ENCODE measurements at regions of chr7 and their contacts with region 1.

Region 1: GRCh38 chr7:37342688-37343471 is 105.8 kb downstream of the ELMO1 start:
- DNase-seq: peak; percentile 52 to 91 (median 70)
- ATAC-seq: peak; percentile 88
- H3K4me3 ChIP-seq: peak overlapping the region; percentile 62
- H3K4me3 Mint-ChIP-seq: peak overlapping the region; percentile 90
- H3K27ac ChIP-seq: peak overlapping the region; percentile 67 to 82
- H3K27ac Mint-ChIP-seq: peak overlapping the region; percentile 95
- H3K4me1 ChIP-seq: peaks cover 40% of the 10 kb centered on the region
- H3K4me1 Mint-ChIP-seq: peaks cover 72% of the 10 kb centered on the region
- H3K27me3 ChIP-seq: no peaks in the 10 kb centered on the region
- H3K27me3 Mint-ChIP-seq: no peaks in the 10 kb centered on the region
- CTCF ChIP-seq: peak; percentile 23

Region 2: DNA sequence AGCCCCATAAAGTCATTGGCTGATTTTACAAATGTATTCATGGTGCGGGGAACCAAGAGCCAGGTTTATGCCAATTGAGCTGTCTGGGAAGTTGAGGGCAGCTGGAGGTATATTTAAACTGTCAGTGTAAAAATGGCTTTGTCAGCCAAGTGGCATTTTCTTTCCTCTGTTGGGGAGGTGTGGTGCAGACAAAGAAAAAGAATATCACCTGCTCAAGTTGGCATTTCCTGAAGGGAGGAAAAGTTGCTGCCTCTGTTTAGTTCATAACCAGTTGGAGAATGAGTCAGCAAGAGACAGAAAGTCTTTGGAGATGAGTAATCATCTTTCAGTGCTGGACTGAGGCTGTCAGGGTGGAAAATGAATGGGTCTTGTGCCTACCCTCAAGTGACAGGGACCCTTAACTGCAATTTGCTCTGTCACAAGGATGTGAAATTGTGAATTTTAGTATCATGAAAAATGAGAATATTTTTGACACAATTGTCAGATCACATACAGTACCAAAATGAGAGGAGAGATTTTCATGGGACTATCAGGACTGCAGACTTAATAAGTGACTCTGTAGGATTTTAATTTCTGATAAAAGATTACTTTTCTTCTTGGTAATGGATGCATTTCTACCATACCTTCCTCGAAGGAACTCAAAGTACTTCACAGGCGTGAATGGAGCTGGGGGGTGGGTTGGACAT is 815.9 kb before region 1 on chr7:
- CTCF ChIA-PET with region 1: no interaction called
- POLR2A ChIA-PET with region 1: no interaction called
- intact Hi-C with region 1: no loop called
- DNase-seq: no peak
- ATAC-seq: no peak
- H3K4me3 ChIP-seq: no peak overlapping the region
- H3K4me3 Mint-ChIP-seq: no peak overlapping the region
- H3K27ac ChIP-seq: no peak overlapping the region
- H3K27ac Mint-ChIP-seq: no peak overlapping the region
- H3K4me1 ChIP-seq: no peaks in the 10 kb centered on the region
- H3K4me1 Mint-ChIP-seq: no peaks in the 10 kb centered on the region
- H3K27me3 ChIP-seq: no peaks in the 10 kb centered on the region
- H3K27me3 Mint-ChIP-seq: no peaks in the 10 kb centered on the region
- CTCF ChIP-seq: no peak

Region 3: DNA sequence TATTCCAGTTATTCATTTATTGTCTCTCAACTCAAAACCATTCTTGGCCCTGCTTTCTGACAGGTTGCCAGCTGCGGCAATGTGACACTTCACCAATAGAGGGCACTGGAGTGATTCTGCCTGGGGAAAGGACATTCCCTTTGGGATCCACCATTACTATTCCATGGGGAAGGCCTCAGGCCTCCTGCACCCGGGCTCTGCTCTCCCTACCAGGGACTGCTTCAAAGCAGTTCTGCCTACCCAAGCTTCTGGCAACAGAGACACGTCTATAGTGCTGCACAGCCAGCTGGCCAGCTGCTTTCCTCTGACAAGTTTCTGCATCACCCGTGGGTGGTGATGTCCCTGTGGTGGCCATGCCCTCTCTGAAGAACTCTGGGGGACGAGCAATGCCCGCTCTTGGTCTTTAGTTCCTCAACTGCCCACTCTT is 58.1 kb before region 1 on chr7:
- CTCF ChIA-PET with region 1: interaction called, 8 read pairs
- POLR2A ChIA-PET with region 1: interaction called, 8 read pairs
- intact Hi-C with region 1: loop called in 1 of 2 experiments (anchors 1 kb)
- DNase-seq: peak in 13 of 14 experiments; percentile 6 to 62 (median 31)
- ATAC-seq: peak; percentile 53
- H3K4me3 ChIP-seq: no peak overlapping the region
- H3K4me3 Mint-ChIP-seq: no peak overlapping the region
- H3K27ac ChIP-seq: no peak overlapping the region
- H3K27ac Mint-ChIP-seq: peak overlapping the region; percentile 75
- H3K4me1 ChIP-seq: peaks cover 19% of the 10 kb centered on the region
- H3K4me1 Mint-ChIP-seq: peaks cover 66% of the 10 kb centered on the region
- H3K27me3 ChIP-seq: no peaks in the 10 kb centered on the region
- H3K27me3 Mint-ChIP-seq: no peaks in the 10 kb centered on the region
- CTCF ChIP-seq: peak; percentile 88

Region 4: GRCh38 chr7:37304921-37305320 is 38.0 kb before region 1 on chr7:
- CTCF ChIA-PET with region 1: interaction called, 5 read pairs
- POLR2A ChIA-PET with region 1: interaction called, 4 read pairs
- intact Hi-C with region 1: loop called (anchors 2 to 5 kb)
- DNase-seq: no peak
- ATAC-seq: no peak
- H3K4me3 ChIP-seq: no peak overlapping the region
- H3K4me3 Mint-ChIP-seq: no peak overlapping the region
- H3K27ac ChIP-seq: no peak overlapping the region
- H3K27ac Mint-ChIP-seq: no peak overlapping the region
- H3K4me1 ChIP-seq: peaks cover 8% of the 10 kb centered on the region
- H3K4me1 Mint-ChIP-seq: peaks cover 60% of the 10 kb centered on the region
- H3K27me3 ChIP-seq: no peaks in the 10 kb centered on the region
- H3K27me3 Mint-ChIP-seq: no peaks in the 10 kb centered on the region
- CTCF ChIP-seq: no peak

Region 5: DNA sequence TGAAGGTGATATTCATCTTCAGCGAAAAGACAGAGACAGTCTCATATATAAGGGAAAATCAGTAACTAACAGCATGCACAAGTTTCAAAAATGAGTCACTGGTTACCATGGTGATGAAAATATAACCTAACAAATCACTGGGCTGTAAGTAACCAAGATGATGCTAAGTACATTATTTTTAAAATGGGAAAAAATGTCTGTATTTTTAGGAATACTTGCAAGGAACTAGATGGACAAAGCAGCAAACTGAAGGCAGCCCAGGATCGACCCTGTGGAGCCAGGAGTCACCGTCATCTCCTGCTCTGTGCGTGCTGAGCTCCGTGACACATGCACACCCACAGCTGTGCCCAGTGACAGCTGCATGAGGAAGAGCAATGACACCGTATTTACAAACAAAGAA is 31.5 kb before region 1 on chr7:
- CTCF ChIA-PET with region 1: interaction called, 5 read pairs
- POLR2A ChIA-PET with region 1: interaction called, 5 read pairs
- intact Hi-C with region 1: loop called (anchors 2 to 5 kb)
- DNase-seq: peak in 10 of 14 experiments; percentile 6 to 73 (median 23)
- ATAC-seq: peak; percentile 55
- H3K4me3 ChIP-seq: no peak overlapping the region
- H3K4me3 Mint-ChIP-seq: peak overlapping the region; percentile 81
- H3K27ac ChIP-seq: peak overlapping the region in 1 of 2 donors; percentile 82
- H3K27ac Mint-ChIP-seq: peak overlapping the region; percentile 92
- H3K4me1 ChIP-seq: peaks cover 44% of the 10 kb centered on the region
- H3K4me1 Mint-ChIP-seq: peaks cover 89% of the 10 kb centered on the region
- H3K27me3 ChIP-seq: no peaks in the 10 kb centered on the region
- H3K27me3 Mint-ChIP-seq: no peaks in the 10 kb centered on the region
- CTCF ChIP-seq: no peak

Region 6: DNA sequence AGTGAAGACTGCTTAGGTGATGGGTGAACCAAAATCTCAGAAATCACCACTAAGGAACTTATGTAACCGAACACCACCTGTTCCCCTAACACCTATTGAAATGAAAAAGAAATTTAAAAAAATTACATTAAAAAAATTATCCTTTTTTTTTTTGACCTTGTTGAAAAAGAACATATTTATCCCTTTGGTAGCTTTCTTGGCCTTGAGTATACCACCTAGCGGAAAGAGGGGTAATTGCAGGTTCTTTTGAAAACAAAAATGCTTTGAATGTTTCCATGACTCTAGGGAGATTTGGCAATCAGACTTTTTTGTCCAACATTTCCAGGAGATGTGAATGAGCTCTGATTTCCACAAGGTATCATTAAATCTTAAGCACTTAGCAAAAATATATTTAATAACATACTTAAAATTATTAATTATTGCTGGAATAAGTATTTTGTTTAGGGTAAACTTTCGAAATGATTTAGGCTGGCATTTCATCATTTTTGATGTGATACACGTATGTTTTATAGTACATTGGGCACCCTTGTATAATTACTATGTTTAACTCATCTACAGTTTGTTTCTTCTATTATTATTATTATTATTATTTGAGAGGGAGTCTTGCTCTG is 152.8 kb after region 1 on chr7:
- CTCF ChIA-PET with region 1: no interaction called
- POLR2A ChIA-PET with region 1: interaction called, 4 read pairs
- intact Hi-C with region 1: loop called in 1 of 2 experiments (anchors 5 kb)
- DNase-seq: peak in 3 of 14 experiments; percentile 47 to 59 (median 51)
- ATAC-seq: peak; percentile 68
- H3K4me3 ChIP-seq: no peak overlapping the region
- H3K4me3 Mint-ChIP-seq: no peak overlapping the region
- H3K27ac ChIP-seq: no peak overlapping the region
- H3K27ac Mint-ChIP-seq: no peak overlapping the region
- H3K4me1 ChIP-seq: no peaks in the 10 kb centered on the region
- H3K4me1 Mint-ChIP-seq: no peaks in the 10 kb centered on the region
- H3K27me3 ChIP-seq: no peaks in the 10 kb centered on the region
- H3K27me3 Mint-ChIP-seq: no peaks in the 10 kb centered on the region
- CTCF ChIP-seq: peak; percentile 89

Measured in CD4-positive, alpha-beta T cell (primary cell).